Breast epithelium (tissue), 4 donors: ENCODE measurements at regions of chr1 and their contacts with region 1.

Region 1: DNA sequence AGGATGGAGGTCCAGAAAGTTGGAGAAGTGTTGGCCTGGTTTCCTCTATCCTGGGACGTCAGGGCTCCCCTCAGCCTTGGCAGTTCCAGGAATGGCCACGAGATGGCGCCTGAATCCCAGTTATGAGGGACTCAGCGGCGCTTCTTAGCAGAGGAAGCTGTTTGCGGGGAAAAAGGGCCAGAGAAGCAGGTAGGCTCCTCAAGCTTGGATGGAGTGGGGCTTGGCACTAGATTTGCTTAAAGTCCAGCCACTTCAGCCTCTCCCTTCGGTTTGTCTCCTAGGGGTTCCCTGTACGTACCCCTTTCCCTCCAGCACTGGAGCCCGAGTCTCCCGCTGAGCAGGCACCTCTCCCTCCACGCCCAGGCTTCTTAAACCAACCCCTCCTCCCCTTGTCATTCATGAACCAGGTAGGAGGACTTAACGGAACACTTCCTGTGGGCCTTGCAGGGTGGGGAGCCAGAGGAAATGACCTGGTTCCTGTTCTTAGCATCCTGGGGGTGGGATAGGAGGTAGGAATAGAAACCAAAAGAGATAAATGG is 32.0 kb upstream of the TENT5B start:
- DNase-seq: peak; percentile 86 to 92
- H3K4me3 ChIP-seq: peak overlapping the region in 1 of 3 donors; percentile 39
- H3K27ac ChIP-seq: no peak overlapping the region
- H3K4me1 ChIP-seq: no peaks in the 10 kb centered on the region
- H3K27me3 ChIP-seq: no peaks in the 10 kb centered on the region
- CTCF ChIP-seq: peak; percentile 96 to 99 (median 96)
- POLR2A ChIP-seq: no peak

Region 2: DNA sequence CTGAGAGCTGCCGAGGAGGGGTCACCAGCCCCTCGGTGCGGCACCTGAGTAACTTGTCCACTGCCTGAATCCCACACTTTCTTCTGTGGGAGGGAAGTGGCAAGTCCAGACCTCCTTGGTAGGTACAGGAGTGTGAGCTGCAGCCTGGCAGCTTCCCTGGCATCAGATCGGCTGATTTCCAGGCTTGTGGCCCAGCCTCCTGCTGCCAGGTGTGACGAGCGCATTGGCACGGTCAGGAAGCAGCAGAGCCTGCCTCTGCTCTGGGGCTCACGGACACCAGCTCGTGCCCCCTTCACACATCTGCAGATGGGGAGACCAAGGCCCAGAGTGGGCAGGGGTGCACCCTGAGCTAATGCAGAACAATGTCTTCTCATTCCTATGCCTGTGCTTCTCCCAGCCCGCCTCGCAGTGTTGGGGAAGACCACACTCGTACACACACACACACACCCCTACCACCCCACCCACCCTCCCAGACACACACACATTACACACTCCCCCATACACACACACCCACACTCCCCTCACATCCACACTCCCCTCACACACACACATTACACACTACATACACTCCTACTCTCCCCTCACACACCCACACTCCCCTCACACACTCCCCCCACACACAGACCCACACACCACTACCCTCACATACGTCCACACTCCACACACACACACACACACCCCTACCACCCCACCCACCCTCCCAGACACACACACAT is 1277.8 kb before region 1 on chr1:
- intact Hi-C with region 1: no loop called
- DNase-seq: peak; percentile 88 to 89
- H3K4me3 ChIP-seq: peak overlapping the region in 1 of 3 donors; percentile 4
- H3K27ac ChIP-seq: no peak overlapping the region
- H3K4me1 ChIP-seq: no peaks in the 10 kb centered on the region
- H3K27me3 ChIP-seq: no peaks in the 10 kb centered on the region
- CTCF ChIP-seq: no peak
- POLR2A ChIP-seq: no peak

Region 3: DNA sequence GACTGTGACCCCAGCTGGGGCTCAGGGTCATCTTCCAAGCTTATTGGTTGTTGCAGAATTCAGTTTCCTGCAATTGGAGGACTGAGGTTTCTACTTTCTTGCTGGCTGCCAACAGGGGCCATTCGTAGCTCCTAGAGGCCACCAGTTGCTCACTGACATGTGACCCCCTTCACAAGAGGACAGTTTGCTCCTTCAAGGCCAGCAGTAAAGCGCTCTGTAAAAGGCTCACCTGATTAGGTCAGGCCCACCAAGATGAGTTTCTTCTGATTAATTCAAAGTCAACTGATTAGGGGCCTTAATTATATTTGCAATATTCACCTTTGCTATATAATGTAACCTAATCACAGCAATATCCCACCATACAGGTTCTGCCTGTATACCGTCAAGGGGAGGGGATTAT is 41.3 kb after region 1 on chr1:
- intact Hi-C with region 1: no loop called
- DNase-seq: no peak
- H3K4me3 ChIP-seq: no peak overlapping the region
- H3K27ac ChIP-seq: no peak overlapping the region
- H3K4me1 ChIP-seq: no peaks in the 10 kb centered on the region
- H3K27me3 ChIP-seq: no peaks in the 10 kb centered on the region
- CTCF ChIP-seq: no peak
- POLR2A ChIP-seq: no peak

Region 4: DNA sequence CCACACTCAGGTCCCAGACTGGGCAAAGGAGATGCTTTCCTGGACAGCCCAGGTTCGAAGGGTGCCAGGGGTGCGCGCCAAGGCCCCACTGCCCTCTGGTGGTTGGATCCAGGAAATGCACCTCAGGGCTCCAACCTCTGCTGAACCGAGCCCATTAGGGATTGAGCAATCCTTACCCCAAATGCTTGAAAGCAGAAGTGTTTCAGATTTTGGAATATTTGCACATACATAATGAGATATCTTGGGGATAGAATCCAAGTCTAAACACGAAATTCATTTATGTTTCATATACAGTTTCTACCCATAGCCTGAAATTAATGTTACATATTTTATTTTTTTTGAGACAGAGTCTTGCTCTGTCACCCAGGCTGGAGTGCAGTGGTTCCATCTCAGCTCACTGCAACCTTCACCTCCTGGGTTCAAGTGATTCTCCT is 52.8 kb after region 1 on chr1:
- intact Hi-C with region 1: loop called (anchors 5 kb)
- DNase-seq: peak; percentile 82 to 86
- H3K4me3 ChIP-seq: no peak overlapping the region
- H3K27ac ChIP-seq: peak overlapping the region; percentile 90 to 96
- H3K4me1 ChIP-seq: peaks cover 16 to 24% of the 10 kb centered on the region in 2 donors
- H3K27me3 ChIP-seq: no peaks in the 10 kb centered on the region
- CTCF ChIP-seq: peak; percentile 99
- POLR2A ChIP-seq: no peak